GM18951 (cell line): ENCODE measurements at regions of chr16 and their contacts with region 1.

Region 1: DNA sequence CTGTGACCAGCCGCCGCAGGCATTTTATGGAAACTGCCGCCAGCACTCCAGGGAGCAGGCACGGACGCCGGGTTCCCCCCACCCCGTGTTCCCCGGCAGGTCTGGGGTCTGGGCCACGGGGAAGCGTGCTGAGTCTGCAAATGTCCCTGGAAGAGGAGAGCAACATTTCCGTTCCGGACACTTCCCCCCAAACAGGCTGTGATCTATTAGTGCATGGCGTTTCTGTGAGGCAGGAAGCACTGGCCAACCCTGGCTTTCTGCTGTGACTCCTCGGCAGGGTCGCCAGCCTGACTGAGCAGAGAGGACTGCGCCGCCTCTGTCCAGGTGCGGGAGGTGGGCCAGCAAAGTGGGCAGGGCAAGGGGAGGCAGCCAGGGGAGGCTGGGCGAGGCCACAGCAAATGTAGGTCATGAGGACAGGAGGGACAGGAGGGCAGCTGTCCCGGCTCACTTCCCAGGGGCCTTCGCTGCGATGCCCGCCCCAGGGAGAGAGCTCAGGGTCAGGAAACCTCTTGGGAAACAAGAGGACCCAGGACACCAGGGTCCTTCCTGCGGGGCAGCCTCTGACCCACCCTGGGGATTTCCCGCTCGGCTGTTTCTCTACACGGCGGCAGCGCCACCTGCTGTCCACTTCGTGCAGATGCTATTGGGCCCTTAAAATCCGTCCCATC is 9.5 kb downstream of the FOXF1 start:
- POLR2A ChIP-seq: no peak

Region 2: DNA sequence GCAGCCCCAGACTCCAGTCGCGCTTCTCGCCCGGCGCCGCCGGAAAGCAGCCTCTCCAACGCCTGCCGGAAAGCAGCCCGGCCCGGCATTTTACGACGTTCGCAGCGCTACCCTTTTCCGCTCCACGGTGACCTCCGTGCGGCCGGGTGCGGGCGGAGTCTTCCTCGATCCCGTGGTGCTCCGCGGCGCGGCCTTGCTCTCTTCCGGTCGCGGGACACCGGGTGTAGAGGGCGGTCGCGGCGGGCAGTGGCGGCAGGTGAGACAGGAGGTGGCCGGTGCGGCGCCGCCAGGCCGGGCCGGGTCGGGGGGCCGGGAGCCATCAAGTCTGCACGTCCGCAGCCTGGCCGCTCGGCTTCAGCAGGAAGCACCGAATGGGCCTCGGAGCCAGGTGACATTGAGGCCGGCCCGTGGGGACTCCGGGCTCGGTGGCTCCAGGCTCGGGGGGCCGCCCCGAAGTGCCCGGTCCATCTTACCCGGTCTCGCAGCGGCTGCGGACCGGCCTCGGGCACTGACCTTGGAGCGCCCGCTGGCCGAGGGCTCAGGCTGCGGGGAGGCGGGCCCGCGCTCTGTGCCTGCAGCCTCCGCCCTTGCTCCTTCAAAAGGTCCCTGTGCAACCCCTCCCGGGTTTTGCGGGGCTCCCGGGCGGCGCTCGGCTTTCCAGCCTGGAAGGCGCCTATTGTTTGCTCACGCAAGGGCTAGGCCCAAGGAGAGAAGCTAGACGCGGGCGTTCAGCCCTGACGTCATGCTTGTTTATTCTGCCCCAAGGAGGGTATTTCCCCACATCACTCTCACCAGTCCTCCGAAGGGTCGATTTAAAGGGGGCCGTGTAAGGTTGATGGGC is 720.1 kb before region 1 on chr16 and contains the starts of genes COX4I1 and EMC8:
- in situ Hi-C with region 1: loop called (anchors 25 kb)
- POLR2A ChIP-seq: peak; percentile 92

Region 3: DNA sequence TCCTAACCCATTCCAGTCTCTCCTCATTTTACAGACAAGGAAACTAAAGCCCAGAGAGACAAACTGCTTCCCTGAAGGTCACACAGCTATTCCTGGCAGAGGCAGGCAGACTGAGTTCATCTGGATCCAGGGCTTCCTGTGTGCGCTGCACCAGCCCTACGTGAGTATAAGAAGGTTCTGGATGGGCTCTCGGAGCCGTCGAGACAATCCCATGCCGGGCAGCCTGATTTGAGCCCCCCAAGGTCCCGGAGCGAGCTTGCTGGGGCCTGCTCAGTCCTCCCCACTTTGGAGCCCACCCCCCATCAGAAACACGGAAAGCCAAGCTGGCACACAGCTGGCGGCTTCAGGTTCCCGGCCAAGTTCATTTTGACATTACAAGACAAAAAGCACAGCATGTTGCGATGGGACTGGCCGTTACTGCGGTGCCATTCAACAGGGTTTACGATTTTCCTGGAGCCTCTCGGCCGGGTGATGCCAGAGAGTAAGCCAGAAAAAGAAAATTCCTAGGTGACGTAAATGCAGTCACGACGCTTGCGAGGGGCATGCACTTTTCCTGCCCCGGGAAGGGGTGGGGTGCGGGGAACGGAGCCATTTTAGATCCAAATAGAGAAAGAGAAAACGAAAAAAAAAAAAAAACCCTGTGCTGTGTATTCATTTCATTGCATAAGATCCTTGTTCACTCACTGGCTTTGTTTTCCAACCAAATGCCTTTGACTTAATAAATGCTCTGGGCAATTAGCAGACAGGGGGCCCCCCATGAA is 176.6 kb before region 1 on chr16:
- in situ Hi-C with region 1: loop called (anchors 25 kb)
- POLR2A ChIP-seq: no peak